GM10248 (cell line): ENCODE measurements at regions of chr10 and their contacts with region 1.

Region 1: DNA sequence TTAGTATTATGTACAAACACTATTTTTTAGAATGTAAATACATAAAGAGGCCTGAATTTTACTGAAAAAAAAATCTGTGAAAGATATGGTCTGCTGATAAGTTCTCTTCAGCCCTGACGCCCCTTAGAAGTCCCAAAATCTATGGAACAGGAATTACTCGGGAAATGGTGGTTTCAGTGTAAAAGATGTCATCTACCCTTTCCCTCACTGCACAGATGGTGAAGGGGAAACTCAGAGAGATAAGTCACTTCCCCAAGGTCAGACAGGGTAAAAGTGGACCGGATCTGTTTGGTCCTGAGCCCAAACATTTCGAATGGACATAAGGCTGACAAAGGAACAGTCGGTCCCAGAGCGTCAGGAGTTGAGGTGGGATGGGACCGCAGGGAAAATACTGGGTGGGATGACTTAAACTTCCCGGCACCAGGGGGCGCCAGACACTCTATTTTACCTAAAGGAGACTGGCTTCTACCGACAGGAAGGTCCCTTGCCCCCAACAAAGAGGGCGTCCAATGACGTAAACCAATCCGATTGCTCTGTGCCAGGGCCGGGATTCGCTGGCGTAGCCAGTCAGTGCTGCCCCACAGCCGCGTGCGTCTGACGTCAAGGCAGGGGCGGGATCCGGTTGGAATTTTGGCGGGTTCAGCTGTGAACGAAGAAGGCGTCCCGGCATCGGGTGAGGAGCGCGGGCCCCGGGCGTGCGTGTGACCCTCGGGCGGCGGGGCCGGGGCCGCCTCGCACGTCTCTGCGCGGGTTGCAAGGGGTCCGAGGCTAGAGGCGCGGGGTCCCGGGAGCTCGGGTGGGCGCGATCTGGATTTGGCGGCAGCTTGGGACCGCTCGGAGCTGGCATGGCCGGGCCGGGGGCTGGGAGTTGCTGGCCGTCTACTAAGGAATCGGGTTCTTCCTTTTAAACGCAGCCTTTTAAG is at the start of gene MCM10:
- DNase-seq: peak; percentile 97
- CTCF ChIP-seq: peak; percentile 71

Region 2: GRCh38 chr10:13106387-13107045 is 54.7 kb before region 1 on chr10:
- CTCF ChIA-PET with region 1: no interaction called
- POLR2A ChIA-PET with region 1: no interaction called
- DNase-seq: no peak
- CTCF ChIP-seq: no peak

Region 3: GRCh38 chr10:13120786-13121499 is 40.3 kb before region 1 on chr10:
- CTCF ChIA-PET with region 1: no interaction called
- POLR2A ChIA-PET with region 1: no interaction called
- DNase-seq: no peak
- CTCF ChIP-seq: no peak

Region 4: GRCh38 chr10:13147161-13147560 is 14.0 kb before region 1 on chr10:
- CTCF ChIA-PET with region 1: interaction called, 15 read pairs
- POLR2A ChIA-PET with region 1: no interaction called
- DNase-seq: no peak
- CTCF ChIP-seq: no peak

Region 5: DNA sequence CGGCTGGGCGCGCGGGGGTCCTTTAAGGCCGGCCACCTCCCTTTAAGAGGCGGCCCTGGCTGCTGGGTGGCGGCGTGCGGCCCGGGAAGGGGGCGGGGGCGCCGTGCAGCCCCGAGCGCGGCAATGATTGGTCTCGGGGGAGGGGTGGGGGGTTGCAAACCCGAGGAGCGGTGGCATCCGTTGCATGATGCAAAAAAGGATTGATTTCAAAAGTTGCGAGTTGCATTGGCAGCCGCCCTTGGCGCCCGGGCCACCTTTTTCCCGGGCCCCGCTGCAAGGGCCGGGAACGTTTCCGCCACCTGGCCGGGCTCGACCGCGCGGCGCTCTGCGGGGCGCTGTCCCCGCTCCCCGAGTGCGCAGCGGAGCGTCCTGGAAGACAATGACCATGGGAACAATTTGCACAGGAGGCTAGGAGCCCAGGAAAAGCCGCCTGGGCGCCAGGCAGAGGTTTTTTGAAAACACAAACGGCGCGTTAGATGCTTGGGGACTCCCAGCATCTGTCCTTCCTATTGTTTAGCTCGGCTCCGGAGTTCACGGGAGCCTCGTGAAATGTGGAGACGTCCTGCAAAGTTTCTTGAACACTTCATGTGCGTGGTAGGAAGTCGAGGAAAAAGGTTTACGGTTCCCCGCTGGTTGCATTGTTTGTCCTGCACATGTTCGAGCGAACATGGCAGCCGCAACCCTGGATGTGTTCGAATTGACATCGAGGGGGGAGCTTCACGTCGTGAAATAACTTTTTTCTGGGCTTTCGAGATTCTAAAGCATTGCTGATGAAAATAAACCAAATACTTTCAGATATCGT is 187.2 kb after region 1 on chr10 and contains the start of gene SEPHS1:
- CTCF ChIA-PET with region 1: interaction called, 22 read pairs
- POLR2A ChIA-PET with region 1: interaction called, 3 read pairs
- DNase-seq: peak; percentile 87
- CTCF ChIP-seq: no peak